H1 (cell line): ENCODE measurements at regions of chr4 and their contacts with region 1.

Region 1: DNA sequence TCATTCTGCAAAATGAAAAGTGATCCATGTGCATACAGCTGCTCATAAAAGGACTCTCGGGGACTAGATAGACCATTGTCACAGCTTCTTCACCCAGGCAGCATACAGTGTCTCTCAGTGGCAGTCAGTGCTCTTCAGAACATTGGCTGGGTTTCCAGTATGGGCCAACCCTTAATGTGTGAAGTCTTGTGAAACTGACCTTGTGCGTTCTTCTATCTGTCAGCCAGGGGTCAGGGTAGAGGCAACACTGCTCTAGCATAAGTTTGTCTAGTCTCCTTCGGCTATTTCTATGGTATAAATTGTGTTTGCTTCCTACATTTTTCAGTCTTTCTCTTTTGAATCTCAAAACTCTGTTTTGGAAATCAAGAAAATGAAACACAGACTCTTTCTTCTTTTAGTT is 37.0 kb upstream of the SMIM31 start:
- DNase-seq: no peak
- H3K4me3 ChIP-seq: no peak overlapping the region
- H3K27ac ChIP-seq: no peak overlapping the region
- H3K4me1 ChIP-seq: no peaks in the 10 kb centered on the region
- H3K27me3 ChIP-seq: no peaks in the 10 kb centered on the region
- CTCF ChIP-seq: peak; percentile 20 to 78 (median 54)
- EP300 ChIP-seq: no peak
- POLR2A ChIP-seq: no peak
- RAD21 ChIP-seq: peak; percentile 48 to 52

Region 2: DNA sequence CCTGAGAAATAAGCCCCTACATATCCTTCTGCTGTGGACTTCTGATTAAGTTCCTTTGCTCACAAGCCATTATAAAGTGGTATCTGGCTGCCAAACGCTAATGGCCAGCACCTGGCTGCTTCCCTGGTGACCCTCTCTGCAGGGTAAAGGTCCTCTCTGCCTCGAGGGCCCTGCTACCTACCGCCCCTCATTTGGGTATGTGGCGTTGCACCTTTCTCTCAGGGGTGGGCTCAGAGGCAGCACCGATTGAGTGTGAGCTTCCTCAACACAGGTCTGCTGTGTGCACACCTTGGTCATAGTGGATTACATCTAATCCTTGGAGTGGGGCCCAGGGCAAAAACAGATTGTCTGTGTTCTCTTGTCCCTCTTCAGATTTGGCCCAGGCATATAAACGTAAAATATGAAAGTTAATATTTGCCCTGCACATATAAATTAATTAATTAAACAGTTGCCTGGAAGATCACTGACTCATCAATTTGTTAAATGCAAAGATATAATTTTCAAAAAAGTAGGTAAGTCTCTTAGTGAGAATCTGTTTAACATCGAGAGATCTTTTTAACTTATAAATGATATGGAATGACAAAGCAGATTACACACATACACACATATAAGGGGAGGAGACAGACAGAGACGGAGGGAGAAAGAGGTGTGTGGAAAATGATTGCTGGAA is 137.5 kb before region 1 on chr4:
- CTCF ChIA-PET with region 1: no interaction called
- POLR2A ChIA-PET with region 1: no interaction called
- DNase-seq: no peak
- H3K4me3 ChIP-seq: no peak overlapping the region
- H3K27ac ChIP-seq: no peak overlapping the region
- H3K4me1 ChIP-seq: no peaks in the 10 kb centered on the region
- H3K27me3 ChIP-seq: no peaks in the 10 kb centered on the region
- CTCF ChIP-seq: no peak
- EP300 ChIP-seq: no peak
- POLR2A ChIP-seq: no peak
- RAD21 ChIP-seq: no peak

Region 3: DNA sequence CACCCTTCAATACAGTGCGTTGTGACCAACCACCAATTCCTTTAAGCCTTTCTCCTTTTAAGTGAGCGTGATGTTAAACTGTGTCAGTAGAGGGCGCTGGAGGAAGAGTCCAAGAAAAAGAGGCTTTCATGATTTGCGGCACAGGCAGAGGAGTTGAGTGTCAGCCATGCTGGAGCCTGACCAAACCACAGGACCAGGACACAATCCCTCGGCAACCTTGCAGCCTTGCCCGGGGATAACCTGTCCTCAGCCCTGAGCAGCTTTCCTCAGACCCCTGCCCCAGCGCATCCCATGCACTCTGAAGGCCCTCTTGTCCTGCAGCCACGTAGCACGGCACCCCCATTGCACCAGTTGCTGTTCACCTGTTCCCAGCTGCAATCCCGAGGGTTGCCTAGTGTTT is 16.4 kb before region 1 on chr4:
- CTCF ChIA-PET with region 1: interaction called, 14 read pairs
- POLR2A ChIA-PET with region 1: no interaction called
- DNase-seq: peak; percentile 44 to 81
- H3K4me3 ChIP-seq: no peak overlapping the region
- H3K27ac ChIP-seq: no peak overlapping the region
- H3K4me1 ChIP-seq: no peaks in the 10 kb centered on the region
- H3K27me3 ChIP-seq: no peaks in the 10 kb centered on the region
- CTCF ChIP-seq: peak in 2 of 3 experiments; percentile 59 to 84; a peak in 3 of 4 replicates
- EP300 ChIP-seq: no peak
- POLR2A ChIP-seq: no peak
- RAD21 ChIP-seq: peak; percentile 62 to 76

Region 4: DNA sequence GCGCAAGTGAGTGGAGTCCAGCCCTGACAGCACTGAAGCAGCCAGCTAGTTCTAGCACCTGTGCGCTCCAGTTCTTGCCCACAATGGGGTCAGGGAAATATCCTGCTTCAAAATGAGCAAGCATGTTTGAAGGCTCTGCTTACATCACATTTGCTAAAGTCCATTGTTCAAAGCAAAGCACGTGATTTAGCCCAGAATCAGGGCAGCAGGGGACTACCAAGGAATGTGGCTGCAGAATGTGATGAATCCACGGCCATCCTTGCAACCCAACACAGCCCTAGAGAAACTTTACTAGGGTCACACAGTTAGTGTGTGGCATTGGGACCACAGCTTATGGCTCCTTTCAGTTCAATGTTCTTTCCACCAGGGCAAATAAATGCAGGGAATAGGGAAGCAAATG is 10.2 kb before region 1 on chr4:
- CTCF ChIA-PET with region 1: interaction called, 14 read pairs
- POLR2A ChIA-PET with region 1: no interaction called
- DNase-seq: no peak
- H3K4me3 ChIP-seq: no peak overlapping the region
- H3K27ac ChIP-seq: no peak overlapping the region
- H3K4me1 ChIP-seq: peaks cover 3 to 7% (median 4%) of the 10 kb centered on the region in 4 experiments; a peak in 4 of 7 replicates
- H3K27me3 ChIP-seq: peaks cover 0 to 2% (median 0%) of the 10 kb centered on the region in 4 experiments; a peak in 1 of 7 replicates
- CTCF ChIP-seq: no peak
- EP300 ChIP-seq: no peak
- POLR2A ChIP-seq: no peak
- RAD21 ChIP-seq: no peak